PC-9 (cell line): ENCODE measurements at regions of chr2 and their contacts with region 1.

Region 1: GRCh38 chr2:218659258-218659987 is at the starts of genes BCS1L and ZNF142:
- DNase-seq: peak; percentile 81 to 89
- H3K4me3 ChIP-seq: peak within 1 kb of the TSS; percentile 75
- H3K27ac ChIP-seq: peak within 1 kb of the TSS; percentile 42
- H3K4me1 ChIP-seq: peaks cover 5% of the 10 kb centered on the region; the same call in 1 of the 2 replicates
- H3K27me3 ChIP-seq: no peaks in the 10 kb centered on the region
- CTCF ChIP-seq: no peak
- total RNA-seq, gene BCS1L: 36.0 and 38.8 TPM in 2 replicates
- total RNA-seq, gene ZNF142: 23.1 and 23.7 TPM in 2 replicates

Region 2: DNA sequence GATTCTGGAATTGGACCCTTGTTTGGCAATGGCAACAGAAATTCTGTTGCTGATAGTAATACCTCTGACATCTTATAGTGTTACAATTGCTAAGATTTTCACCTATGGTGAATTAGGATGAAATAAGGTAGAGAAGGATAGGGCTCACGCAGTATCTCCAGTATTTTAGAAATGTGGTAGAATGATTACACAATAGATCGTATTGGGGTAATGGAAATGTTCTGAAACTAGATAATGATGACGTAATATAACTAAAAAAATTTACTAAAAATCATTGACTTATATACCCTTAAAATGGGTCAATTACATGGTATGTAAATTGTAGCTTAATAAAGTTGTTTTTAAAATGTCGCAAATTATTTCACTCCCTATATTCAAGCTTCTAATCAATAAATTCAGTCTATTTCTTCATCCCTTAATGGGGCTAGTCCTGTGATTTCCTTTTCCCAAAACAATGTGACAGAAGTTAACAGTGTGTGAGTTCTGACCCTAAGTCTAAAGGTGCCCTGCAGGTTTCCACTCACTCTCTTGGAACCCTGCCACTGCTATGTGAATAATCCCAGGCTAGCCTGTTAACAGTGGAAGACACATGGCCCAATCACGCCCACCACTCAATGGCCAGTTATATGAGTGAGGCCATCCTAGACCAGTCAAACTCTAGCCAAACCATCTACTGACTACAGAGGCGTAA is 122.5 kb before region 1 on chr2:
- CTCF ChIA-PET with region 1: no interaction called
- POLR2A ChIA-PET with region 1: interaction called, 14 read pairs
- intact Hi-C with region 1: no loop called
- DNase-seq: no peak
- H3K4me3 ChIP-seq: no peak overlapping the region
- H3K27ac ChIP-seq: no peak overlapping the region
- H3K4me1 ChIP-seq: no peaks in the 10 kb centered on the region
- H3K27me3 ChIP-seq: no peaks in the 10 kb centered on the region
- CTCF ChIP-seq: no peak

Region 3: GRCh38 chr2:218568190-218569037 is 91.0 kb before region 1 on chr2 and contains the starts of genes CNOT9 and USP37:
- CTCF ChIA-PET with region 1: no interaction called
- POLR2A ChIA-PET with region 1: no interaction called
- intact Hi-C with region 1: loop called (anchors 2 kb)
- DNase-seq: peak; percentile 91 to 99
- H3K4me3 ChIP-seq: peak within 1 kb of the TSS; percentile 90
- H3K27ac ChIP-seq: peak within 1 kb of the TSS; percentile 81
- H3K4me1 ChIP-seq: peaks cover 29% of the 10 kb centered on the region
- H3K27me3 ChIP-seq: no peaks in the 10 kb centered on the region
- CTCF ChIP-seq: no peak
- total RNA-seq, gene CNOT9: 45.8 and 46.0 TPM in 2 replicates
- total RNA-seq, gene USP37: 13.1 and 15.4 TPM in 2 replicates

Region 4: DNA sequence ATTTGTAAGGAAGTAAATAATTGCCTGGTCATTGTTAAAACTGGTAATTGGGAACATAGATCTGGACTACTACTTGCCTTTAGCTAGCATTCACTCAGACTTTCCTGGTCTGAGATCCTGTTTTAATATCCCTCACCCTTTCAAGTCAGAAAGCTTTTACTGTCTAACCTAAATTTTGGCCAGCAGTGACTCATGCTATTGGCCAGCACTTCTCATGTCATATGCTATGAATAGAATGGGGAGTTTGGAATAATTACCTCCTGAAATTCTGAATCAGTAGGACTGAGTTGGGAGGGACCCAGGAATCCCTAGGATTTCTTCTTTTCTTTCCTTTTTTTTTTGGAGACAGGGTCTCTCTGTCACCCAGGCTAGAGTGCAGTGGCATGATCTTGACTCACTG is 31.8 kb after region 1 on chr2:
- CTCF ChIA-PET with region 1: interaction called, 15 read pairs
- POLR2A ChIA-PET with region 1: no interaction called
- intact Hi-C with region 1: loop called (anchors 1 kb)
- DNase-seq: no peak
- H3K4me3 ChIP-seq: no peak overlapping the region
- H3K27ac ChIP-seq: no peak overlapping the region
- H3K4me1 ChIP-seq: no peaks in the 10 kb centered on the region
- H3K27me3 ChIP-seq: no peaks in the 10 kb centered on the region
- CTCF ChIP-seq: no peak

Region 5: DNA sequence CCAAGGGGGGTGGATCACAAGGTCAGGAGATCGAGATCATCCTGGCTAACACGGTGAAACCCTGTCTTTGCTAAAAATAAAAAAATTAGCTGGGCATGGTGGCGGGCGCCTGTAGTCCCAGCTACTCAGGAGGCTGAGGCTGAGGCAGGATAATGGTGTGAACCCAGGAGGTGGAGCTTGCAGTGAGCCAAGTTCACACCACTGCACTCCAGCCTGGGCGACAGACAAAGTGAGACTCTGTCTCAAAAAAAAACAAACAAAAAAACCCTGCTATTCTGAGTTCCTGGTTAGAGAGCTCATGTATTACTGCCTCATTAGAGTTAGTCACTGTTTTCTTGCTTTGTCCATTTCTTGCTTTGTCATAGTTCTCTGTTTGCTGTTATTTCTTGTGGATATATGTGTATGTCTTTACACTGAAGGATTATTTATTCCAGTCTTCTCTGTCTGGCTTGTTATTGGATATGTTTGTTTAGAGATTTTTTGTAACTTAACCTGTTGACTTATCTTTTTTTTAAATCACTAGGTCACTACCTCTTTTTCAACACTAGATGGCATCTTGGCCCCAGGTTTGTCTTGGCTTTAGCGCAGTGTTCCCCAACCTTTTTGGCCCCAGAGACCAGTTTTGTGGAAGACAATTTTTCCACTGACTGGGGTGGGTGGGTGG is 68.2 kb after region 1 on chr2:
- CTCF ChIA-PET with region 1: interaction called, 4 read pairs
- POLR2A ChIA-PET with region 1: no interaction called
- intact Hi-C with region 1: loop called (anchors 2 kb)
- DNase-seq: peak in 1 of 2 experiments; percentile 78
- H3K4me3 ChIP-seq: no peak overlapping the region
- H3K27ac ChIP-seq: peak overlapping the region; percentile 60
- H3K4me1 ChIP-seq: peaks cover 28% of the 10 kb centered on the region
- H3K27me3 ChIP-seq: no peaks in the 10 kb centered on the region
- CTCF ChIP-seq: peak; percentile 70

Region 6: DNA sequence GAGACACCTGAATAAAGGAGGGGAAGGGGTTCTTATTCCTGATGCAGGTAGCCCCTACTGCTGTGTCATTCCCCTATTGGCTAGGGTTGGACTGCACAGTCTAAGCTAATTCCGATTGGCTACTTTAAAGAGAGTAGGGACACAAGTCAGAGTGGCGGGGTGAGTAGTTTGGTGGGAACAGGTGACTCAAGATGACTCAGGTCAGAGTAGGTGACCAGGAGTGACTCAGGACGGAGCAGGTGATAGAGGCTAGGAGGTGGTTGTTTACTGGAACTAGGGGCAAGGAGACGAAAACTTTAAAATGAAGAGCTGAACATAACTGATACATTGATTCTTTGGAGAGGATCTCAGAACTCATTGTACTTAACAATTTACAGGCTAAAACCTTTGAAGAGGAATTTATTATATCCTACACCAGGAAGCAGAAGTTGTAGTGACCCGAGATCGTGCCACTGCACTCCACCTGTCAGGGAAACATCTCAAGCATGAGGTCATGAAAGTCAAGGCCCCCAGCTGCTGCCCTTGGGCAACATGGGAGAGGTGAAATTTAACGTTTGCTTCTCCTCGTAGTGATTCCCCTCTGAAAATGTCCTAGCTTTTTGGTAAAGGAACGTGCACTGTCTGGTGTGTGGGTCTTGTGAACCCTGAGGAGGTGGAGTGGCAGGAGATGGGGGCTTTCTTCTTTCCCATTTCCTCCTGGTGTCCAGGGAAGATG is 118.0 kb after region 1 on chr2:
- CTCF ChIA-PET with region 1: no interaction called
- POLR2A ChIA-PET with region 1: interaction called, 11 read pairs
- intact Hi-C with region 1: no loop called
- DNase-seq: no peak
- H3K4me3 ChIP-seq: no peak overlapping the region
- H3K27ac ChIP-seq: no peak overlapping the region
- H3K4me1 ChIP-seq: no peaks in the 10 kb centered on the region
- H3K27me3 ChIP-seq: no peaks in the 10 kb centered on the region
- CTCF ChIP-seq: no peak

Region 7: GRCh38 chr2:218898109-218898878 is 238.9 kb after region 1 on chr2:
- CTCF ChIA-PET with region 1: no interaction called
- POLR2A ChIA-PET with region 1: no interaction called
- intact Hi-C with region 1: loop called (anchors 5 kb)
- DNase-seq: peak in 1 of 2 experiments; percentile 71
- H3K4me3 ChIP-seq: no peak overlapping the region
- H3K27ac ChIP-seq: no peak overlapping the region
- H3K4me1 ChIP-seq: peaks cover 49% of the 10 kb centered on the region
- H3K27me3 ChIP-seq: no peaks in the 10 kb centered on the region
- CTCF ChIP-seq: peak; percentile 96